ENCODE measurements at regions of chr3 and their contacts with region 1.

Region 1: GRCh38 chr3:142148792-142149672 is at the start of gene TFDP2:
- DNase-seq: peak; percentile 85 to 91
- ATAC-seq: peak; percentile 96 to 98 (median 98)
- H3K4me3 ChIP-seq: peak within 1 kb of the TSS; percentile 61
- H3K4me3 Mint-ChIP-seq: peak within 1 kb of the TSS; percentile 96
- H3K27ac ChIP-seq: peak within 1 kb of the TSS; percentile 61
- H3K27ac Mint-ChIP-seq: peak within 1 kb of the TSS; percentile 59 to 82
- H3K4me1 ChIP-seq: peaks cover 16% of the 10 kb centered on the region
- H3K4me1 Mint-ChIP-seq: peaks cover 46 to 53% of the 10 kb centered on the region in 2 donors
- H3K27me3 ChIP-seq: no peaks in the 10 kb centered on the region
- H3K27me3 Mint-ChIP-seq: no peaks in the 10 kb centered on the region
- CTCF ChIP-seq: no peak
- total RNA-seq, gene TFDP2: 134 to 154 (median 142) TPM

Region 2: DNA sequence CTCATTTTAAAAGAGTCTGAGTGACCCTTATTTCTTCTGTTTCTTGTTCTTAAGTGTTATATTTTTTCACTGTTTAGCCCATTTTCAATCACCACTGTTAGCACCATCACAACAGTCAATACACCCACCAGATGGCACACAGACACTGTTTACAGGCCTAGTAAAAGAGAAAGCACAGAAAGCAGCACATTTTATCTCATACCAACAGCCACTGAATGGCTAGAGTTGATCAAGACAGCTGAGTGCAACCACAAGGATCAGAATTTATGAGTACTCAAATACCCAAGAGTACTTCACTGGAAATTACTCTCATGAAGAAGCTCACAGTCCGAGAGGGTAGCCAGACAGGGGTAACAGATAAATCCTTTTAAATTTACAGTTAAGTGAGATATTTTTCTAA is 126.7 kb before region 1 on chr3:
- intact Hi-C with region 1: loop called (anchors 5 kb)
- DNase-seq: peak in 1 of 2 donors; percentile 22
- ATAC-seq: peak; percentile 85 to 90 (median 86)
- H3K4me3 ChIP-seq: no peak overlapping the region
- H3K4me3 Mint-ChIP-seq: peak overlapping the region; percentile 1
- H3K27ac ChIP-seq: no peak overlapping the region
- H3K27ac Mint-ChIP-seq: peak overlapping the region; percentile 72 to 78
- H3K4me1 ChIP-seq: peaks cover 7% of the 10 kb centered on the region
- H3K4me1 Mint-ChIP-seq: peaks cover 35 to 38% of the 10 kb centered on the region in 2 donors
- H3K27me3 ChIP-seq: no peaks in the 10 kb centered on the region
- H3K27me3 Mint-ChIP-seq: no peaks in the 10 kb centered on the region
- CTCF ChIP-seq: peak; percentile 20

Region 3: DNA sequence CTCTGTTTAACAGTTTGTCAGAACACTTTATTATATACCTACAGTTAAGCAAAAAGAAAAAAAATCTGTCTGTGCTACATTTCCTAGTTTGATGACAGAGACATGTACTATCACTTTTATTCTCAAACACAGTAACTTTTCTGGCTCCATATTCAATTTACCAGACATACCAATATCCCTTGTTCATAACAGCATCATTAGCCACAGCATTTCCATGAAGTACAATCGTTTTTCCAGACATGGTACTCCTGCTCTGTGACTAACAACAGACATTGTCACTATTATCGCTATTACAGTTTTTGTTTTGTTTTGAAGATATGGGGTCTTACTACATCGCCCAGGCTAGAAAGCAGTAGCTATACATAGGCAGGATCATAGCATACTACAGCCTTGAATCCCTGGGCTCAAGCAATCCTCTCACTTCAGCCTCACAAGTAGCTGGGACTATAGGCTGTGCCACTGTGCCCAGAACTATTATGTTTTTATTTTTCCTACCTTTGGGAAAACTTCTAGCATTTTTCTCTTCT is 14.2 kb before region 1 on chr3:
- intact Hi-C with region 1: loop called (anchors 2 kb)
- DNase-seq: no peak
- ATAC-seq: no peak
- H3K4me3 ChIP-seq: no peak overlapping the region
- H3K4me3 Mint-ChIP-seq: no peak overlapping the region
- H3K27ac ChIP-seq: no peak overlapping the region
- H3K27ac Mint-ChIP-seq: peak overlapping the region; percentile 70 to 88
- H3K4me1 ChIP-seq: peaks cover 8% of the 10 kb centered on the region
- H3K4me1 Mint-ChIP-seq: peaks cover 63 to 70% of the 10 kb centered on the region in 2 donors
- H3K27me3 ChIP-seq: no peaks in the 10 kb centered on the region
- H3K27me3 Mint-ChIP-seq: no peaks in the 10 kb centered on the region
- CTCF ChIP-seq: no peak